ENCODE measurements at regions of chr2 and their contacts with region 1.

Region 1: GRCh38 chr2:120949027-120949956 is 213.6 kb downstream of the GLI2 start:
- DNase-seq: no peak
- H3K4me3 ChIP-seq: no peak overlapping the region
- H3K27ac ChIP-seq: no peak overlapping the region
- H3K4me1 ChIP-seq: peaks cover under 1% of the 10 kb centered on the region
- H3K27me3 ChIP-seq: peaks cover 6% of the 10 kb centered on the region
- CTCF ChIP-seq: peak; percentile 17 to 54

Region 2: GRCh38 chr2:120735746-120736170 is 213.5 kb before region 1 on chr2 and contains the start of gene GLI2:
- CTCF ChIA-PET with region 1: no interaction called
- dilution Hi-C with region 1: no loop called
- in situ Hi-C with region 1: no loop called
- intact Hi-C with region 1: loop called (anchors 5 kb)
- DNase-seq: peak; percentile 71
- H3K4me3 ChIP-seq: peak within 1 kb of the TSS; percentile 28 to 45 (median 39)
- H3K27ac ChIP-seq: no peak within 1 kb of the TSS
- H3K4me1 ChIP-seq: peaks cover 20% of the 10 kb centered on the region
- H3K27me3 ChIP-seq: peaks cover 47% of the 10 kb centered on the region
- CTCF ChIP-seq: peak; percentile 21 to 67
- total RNA-seq, gene GLI2: under 0.01 TPM in 1 of 2 donors, not detected in the other

Measured in mammary epithelial cell (primary cell).